Activated naive CD4-positive, alpha-beta T cell treated with anti-CD3 and anti-CD28 coated beads for 36 hours (primary cell): ENCODE measurements at regions of chr5 and their contacts with region 1.

Region 1: DNA sequence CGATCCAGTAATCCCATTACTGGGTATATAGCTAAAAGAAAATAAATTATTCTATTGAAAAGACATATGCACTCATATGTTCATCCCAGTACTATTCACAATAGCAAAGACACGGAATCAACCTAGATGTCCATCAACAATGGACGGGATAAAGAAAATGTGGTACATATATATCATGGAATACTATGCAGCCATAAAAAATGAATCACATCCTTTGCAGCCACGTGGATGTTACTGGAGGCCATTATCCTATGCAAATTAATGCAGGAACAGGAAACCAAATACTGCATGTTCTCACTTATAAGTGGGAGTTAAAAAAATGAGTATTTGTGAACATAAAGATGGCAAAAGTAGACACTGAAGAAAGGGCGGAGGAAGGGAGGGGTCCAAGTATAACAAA is 16.6 kb upstream of the IRGM start:
- DNase-seq: no peak
- H3K4me3 Mint-ChIP-seq: no peak overlapping the region
- H3K27ac Mint-ChIP-seq: no peak overlapping the region
- H3K4me1 Mint-ChIP-seq: no peaks in the 10 kb centered on the region
- H3K27me3 Mint-ChIP-seq: no peaks in the 10 kb centered on the region

Region 2: DNA sequence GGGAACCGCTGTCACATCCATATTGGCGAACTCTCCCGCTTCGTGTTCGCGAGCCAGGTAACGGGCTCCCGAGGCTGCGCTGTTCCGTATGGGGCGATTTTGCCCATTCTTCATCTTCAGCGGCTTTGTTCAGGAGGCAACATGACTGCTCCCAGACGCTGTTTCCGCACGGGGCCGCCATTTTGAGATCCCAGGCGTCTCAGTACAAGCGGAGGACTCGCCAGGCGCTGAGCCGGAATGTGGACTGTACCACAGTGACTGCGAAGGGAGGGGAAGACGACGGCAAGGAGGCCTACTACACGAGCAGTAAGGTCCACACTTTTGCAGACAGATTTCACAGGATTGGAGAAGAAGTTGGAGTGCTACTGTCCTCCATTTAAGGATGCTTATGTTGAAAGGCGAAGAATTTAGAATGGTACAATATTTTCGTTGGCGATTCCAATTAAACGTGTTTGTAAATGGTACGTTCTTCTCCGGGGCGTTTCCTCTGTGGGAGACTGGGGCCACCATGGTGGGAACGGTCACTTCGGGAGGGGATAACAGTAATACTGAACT is 116.7 kb after region 1 on chr5:
- CTCF ChIA-PET with region 1: no interaction called
- intact Hi-C with region 1: loop called (anchors 10 kb)
- DNase-seq: peak; percentile 4
- H3K4me3 Mint-ChIP-seq: no peak overlapping the region
- H3K27ac Mint-ChIP-seq: no peak overlapping the region
- H3K4me1 Mint-ChIP-seq: no peaks in the 10 kb centered on the region
- H3K27me3 Mint-ChIP-seq: peaks cover 21% of the 10 kb centered on the region

Region 3: GRCh38 chr5:151183451-151184245 is 353.9 kb after region 1 on chr5:
- CTCF ChIA-PET with region 1: no interaction called
- intact Hi-C with region 1: no loop called
- DNase-seq: no peak
- H3K4me3 Mint-ChIP-seq: no peak overlapping the region
- H3K27ac Mint-ChIP-seq: no peak overlapping the region
- H3K4me1 Mint-ChIP-seq: peaks cover 11% of the 10 kb centered on the region
- H3K27me3 Mint-ChIP-seq: no peaks in the 10 kb centered on the region